Left ventricle myocardium superior (tissue), 1 donor: ENCODE measurements at regions of chr12 and their contacts with region 1.

Region 1: GRCh38 chr12:29655861-29656260 is 127.9 kb downstream of the TMTC1 start:
- DNase-seq: peak; percentile 49
- ATAC-seq: peak; percentile 60

Region 2: GRCh38 chr12:29700761-29701481 is 45.1 kb after region 1 on chr12:
- intact Hi-C with region 1: loop called (anchors 10 kb)
- DNase-seq: no peak
- ATAC-seq: no peak